ENCODE measurements at regions of chr9 and their contacts with region 1.

Region 1: DNA sequence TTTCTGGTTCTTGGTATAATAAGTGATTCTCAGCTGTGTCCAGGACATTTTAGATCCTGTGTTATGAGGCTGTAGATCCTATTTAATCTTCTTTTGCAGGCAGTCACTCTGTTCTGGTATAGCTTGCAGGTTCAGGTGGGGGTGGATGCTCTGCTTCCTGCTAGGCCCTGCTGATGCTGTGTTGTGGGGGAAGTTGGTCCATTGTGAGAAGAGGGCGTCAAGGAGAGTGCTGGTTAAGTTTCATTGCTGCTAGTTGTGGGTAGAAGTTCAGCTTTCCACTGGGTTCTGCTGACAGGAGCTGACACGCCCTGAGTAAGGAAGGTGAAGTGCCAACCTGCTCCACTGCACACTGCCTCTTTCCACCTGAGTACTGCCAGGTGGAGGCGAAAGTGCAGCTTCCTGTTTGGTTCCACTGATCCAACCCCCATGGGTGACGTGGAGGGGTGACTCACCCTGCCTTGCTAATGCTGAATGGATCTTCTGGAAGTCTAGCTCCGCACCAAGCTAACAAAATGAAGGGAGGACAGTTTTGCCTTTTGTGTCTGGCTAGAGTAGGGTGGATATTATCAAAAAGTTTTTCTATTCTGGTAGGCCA is 16.3 kb downstream of the NMRK1 start:
- DNase-seq: no peak
- ATAC-seq: peak; percentile 38

Region 2: GRCh38 chr9:74773886-74774479 is 297.6 kb before region 1 on chr9:
- intact Hi-C with region 1: loop called (anchors 5 kb)
- DNase-seq: peak; percentile 80
- ATAC-seq: peak; percentile 90

Region 3: DNA sequence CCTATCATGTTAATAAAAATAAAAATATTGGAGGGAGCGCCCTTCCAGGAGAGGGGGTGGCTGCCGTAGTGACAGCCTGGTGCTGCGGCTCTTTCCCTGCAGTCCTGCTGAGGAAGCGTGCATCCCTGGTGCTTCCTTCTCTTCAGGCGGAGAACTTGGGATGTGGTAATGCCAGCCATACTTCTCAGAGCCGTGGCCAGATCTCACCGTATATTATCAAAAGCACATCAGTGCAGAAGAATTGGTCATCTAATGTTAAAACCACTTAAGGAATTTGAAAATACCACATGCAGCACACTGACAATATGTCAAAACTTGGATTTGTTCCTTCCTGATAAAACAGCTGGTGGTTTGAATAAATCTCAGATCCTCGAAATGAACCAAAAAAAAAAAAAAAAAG is 136.6 kb before region 1 on chr9:
- intact Hi-C with region 1: loop called (anchors 10 kb)
- DNase-seq: no peak
- ATAC-seq: no peak

Region 4: GRCh38 chr9:75013735-75014134 is 57.9 kb before region 1 on chr9:
- intact Hi-C with region 1: no loop called
- DNase-seq: no peak
- ATAC-seq: no peak

Region 5: DNA sequence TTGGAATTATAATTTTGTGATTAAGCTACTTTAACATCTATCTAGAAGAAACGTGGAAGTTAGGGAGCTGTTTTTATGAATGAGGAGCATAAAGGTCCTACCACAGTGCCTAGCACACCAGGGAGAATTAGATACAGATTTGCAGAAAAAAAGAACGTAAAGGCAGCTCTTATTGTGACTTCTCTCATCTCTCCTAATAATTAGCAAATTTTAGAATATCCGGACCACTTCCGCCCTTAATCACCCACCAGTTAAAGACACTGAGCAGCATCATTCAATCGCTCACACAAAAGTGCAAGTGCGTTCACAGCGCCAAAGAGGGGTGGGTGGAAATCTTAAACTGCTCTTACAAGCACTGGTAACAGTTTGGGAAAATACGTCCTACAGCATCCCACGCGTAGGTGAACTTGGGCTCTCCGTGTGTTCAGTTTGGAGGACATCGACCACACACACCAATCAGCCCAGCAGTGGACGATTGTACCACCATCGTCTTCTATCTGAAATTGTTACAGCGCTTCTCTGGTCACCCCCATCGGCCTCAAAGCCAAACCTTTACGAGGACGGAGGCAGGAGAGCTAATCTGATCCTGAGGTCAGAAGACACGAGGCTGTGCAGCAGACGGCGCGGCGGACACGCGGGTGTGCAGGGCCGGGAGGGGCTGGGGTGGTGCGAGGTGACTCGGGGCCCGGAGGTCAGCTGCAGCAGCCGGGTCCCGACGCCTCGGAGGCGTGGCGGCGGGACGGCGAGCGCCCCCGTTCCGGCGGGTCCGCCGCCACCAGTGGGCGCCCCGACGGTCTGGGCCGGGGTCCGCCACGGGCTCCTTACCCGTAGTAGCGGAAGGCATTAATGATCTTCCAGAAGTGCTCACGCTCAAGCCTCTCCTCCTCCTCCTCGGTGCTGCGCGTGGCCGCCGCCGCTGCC is 44.2 kb before region 1 on chr9:
- intact Hi-C with region 1: loop called (anchors 5 kb)
- DNase-seq: peak; percentile 80
- ATAC-seq: peak; percentile 80

Region 6: GRCh38 chr9:75229605-75230332 is 158.1 kb after region 1 on chr9:
- intact Hi-C with region 1: no loop called
- DNase-seq: no peak
- ATAC-seq: peak; percentile 48

Measured in Right ventricle myocardium superior (tissue), 1 donor.